B cell (primary cell): ENCODE measurements at regions of chr1 and their contacts with region 1.

Region 1: GRCh38 chr1:192609110-192610079 is 26.6 kb upstream of the RGS13 start:
- DNase-seq: peak; percentile 92
- ATAC-seq: peak; percentile 93
- H3K4me3 ChIP-seq: peak overlapping the region in 1 of 5 experiments; percentile 0
- H3K4me3 Mint-ChIP-seq: peak overlapping the region; percentile 47
- H3K27ac ChIP-seq: peak overlapping the region; percentile 22 to 66
- H3K27ac Mint-ChIP-seq: peak overlapping the region; percentile 87
- H3K4me1 ChIP-seq: peaks cover 24 to 31% of the 10 kb centered on the region in 2 donors
- H3K4me1 Mint-ChIP-seq: peaks cover 31% of the 10 kb centered on the region
- H3K27me3 ChIP-seq: peaks cover 2 to 17% (median 5%) of the 10 kb centered on the region in 4 experiments
- H3K27me3 Mint-ChIP-seq: peaks cover 11% of the 10 kb centered on the region
- CTCF ChIP-seq: no peak

Region 2: DNA sequence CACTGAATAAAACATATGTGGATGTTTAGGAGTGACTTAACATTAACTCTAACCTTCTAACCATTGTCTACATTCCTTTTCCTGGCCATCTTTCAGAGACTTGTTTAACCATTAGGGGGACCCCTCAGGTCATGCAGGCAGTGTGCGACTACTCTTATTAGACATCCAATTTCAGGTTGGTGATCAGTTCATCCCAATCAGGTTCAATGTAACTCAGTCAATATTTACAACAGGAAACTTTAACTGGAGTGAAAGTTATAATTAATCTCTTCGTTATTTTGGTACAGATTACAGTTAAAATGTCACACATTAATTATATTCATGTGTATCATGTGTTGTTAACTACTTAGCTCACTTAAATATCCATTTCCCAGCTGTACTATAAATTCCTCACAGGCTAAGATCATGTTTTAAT is 102.6 kb before region 1 on chr1:
- CTCF ChIA-PET with region 1: interaction called, 12 read pairs
- POLR2A ChIA-PET with region 1: no interaction called
- intact Hi-C with region 1: loop called (anchors 1 kb)
- DNase-seq: peak; percentile 31
- ATAC-seq: peak; percentile 66
- H3K4me3 ChIP-seq: no peak overlapping the region
- H3K4me3 Mint-ChIP-seq: no peak overlapping the region
- H3K27ac ChIP-seq: no peak overlapping the region
- H3K27ac Mint-ChIP-seq: no peak overlapping the region
- H3K4me1 ChIP-seq: no peaks in the 10 kb centered on the region
- H3K4me1 Mint-ChIP-seq: no peaks in the 10 kb centered on the region
- H3K27me3 ChIP-seq: peaks cover 0 to 3% (median 0%) of the 10 kb centered on the region in 4 experiments
- H3K27me3 Mint-ChIP-seq: peaks cover 10% of the 10 kb centered on the region
- CTCF ChIP-seq: no peak

Region 3: GRCh38 chr1:192539297-192540092 is 69.9 kb before region 1 on chr1:
- CTCF ChIA-PET with region 1: interaction called, 8 read pairs
- POLR2A ChIA-PET with region 1: interaction called, 3 read pairs
- intact Hi-C with region 1: loop called (anchors 1 kb)
- DNase-seq: peak; percentile 25
- ATAC-seq: peak; percentile 16
- H3K4me3 ChIP-seq: no peak overlapping the region
- H3K4me3 Mint-ChIP-seq: peak overlapping the region; percentile 18
- H3K27ac ChIP-seq: peak overlapping the region in 1 of 2 donors; percentile 36
- H3K27ac Mint-ChIP-seq: peak overlapping the region; percentile 8
- H3K4me1 ChIP-seq: peaks cover 13 to 16% of the 10 kb centered on the region in 2 donors
- H3K4me1 Mint-ChIP-seq: peaks cover 35% of the 10 kb centered on the region
- H3K27me3 ChIP-seq: peaks cover 0 to 9% (median 0%) of the 10 kb centered on the region in 4 experiments
- H3K27me3 Mint-ChIP-seq: no peaks in the 10 kb centered on the region
- CTCF ChIP-seq: no peak

Region 4: DNA sequence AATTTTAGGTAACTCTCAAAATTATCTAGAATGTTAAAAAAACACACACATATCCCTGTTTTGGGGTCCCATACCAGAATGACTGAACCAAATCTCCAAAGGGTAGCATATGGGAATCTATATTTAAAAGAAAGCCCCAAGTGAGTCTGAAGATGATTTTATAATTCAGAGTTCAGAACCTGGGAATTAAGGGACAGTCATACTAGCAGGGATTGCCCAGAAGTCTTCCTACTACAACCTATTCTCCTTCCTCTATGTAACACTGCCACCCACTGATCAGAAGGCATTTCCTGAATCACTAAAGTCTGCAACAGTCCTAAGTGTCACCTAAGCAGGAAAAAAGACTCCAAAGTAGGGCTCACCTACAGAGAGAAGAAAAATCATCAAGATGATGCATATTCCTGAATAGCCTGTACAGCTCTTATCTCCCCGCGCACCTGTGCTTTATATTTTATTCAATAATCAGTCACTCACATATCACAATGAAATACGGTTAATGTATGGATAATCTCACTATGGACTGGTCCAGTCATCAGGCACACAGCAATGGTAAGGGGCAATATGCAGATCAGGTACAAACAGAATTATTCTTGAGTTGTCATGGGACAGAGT is 28.9 kb before region 1 on chr1:
- CTCF ChIA-PET with region 1: interaction called, 21 read pairs
- POLR2A ChIA-PET with region 1: no interaction called
- intact Hi-C with region 1: loop called (anchors 1 kb)
- DNase-seq: peak; percentile 55
- ATAC-seq: no peak
- H3K4me3 ChIP-seq: no peak overlapping the region
- H3K4me3 Mint-ChIP-seq: peak overlapping the region; percentile 73
- H3K27ac ChIP-seq: no peak overlapping the region
- H3K27ac Mint-ChIP-seq: no peak overlapping the region
- H3K4me1 ChIP-seq: peaks cover 11 to 13% of the 10 kb centered on the region in 2 donors
- H3K4me1 Mint-ChIP-seq: peaks cover 38% of the 10 kb centered on the region
- H3K27me3 ChIP-seq: peaks cover 0 to 5% (median 0%) of the 10 kb centered on the region in 4 experiments
- H3K27me3 Mint-ChIP-seq: peaks cover 6% of the 10 kb centered on the region
- CTCF ChIP-seq: peak; percentile 31

Region 5: GRCh38 chr1:193019442-193020026 is 410.1 kb after region 1 on chr1:
- CTCF ChIA-PET with region 1: interaction called, 7 read pairs
- POLR2A ChIA-PET with region 1: no interaction called
- intact Hi-C with region 1: loop called (anchors 10 kb)
- DNase-seq: peak; percentile 58
- ATAC-seq: peak; percentile 64
- H3K4me3 ChIP-seq: no peak overlapping the region
- H3K4me3 Mint-ChIP-seq: no peak overlapping the region
- H3K27ac ChIP-seq: no peak overlapping the region
- H3K27ac Mint-ChIP-seq: no peak overlapping the region
- H3K4me1 ChIP-seq: no peaks in the 10 kb centered on the region
- H3K4me1 Mint-ChIP-seq: no peaks in the 10 kb centered on the region
- H3K27me3 ChIP-seq: no peaks in the 10 kb centered on the region
- H3K27me3 Mint-ChIP-seq: no peaks in the 10 kb centered on the region
- CTCF ChIP-seq: peak; percentile 71